Mammary epithelial cell (primary cell): ENCODE measurements at regions of chr17 and their contacts with region 1.

Region 1: GRCh38 chr17:30344283-30345088 is 10.6 kb upstream of the TMIGD1 start:
- DNase-seq: peak; percentile 32
- H3K4me3 ChIP-seq: no peak overlapping the region
- H3K27ac ChIP-seq: no peak overlapping the region
- H3K4me1 ChIP-seq: peaks cover 28% of the 10 kb centered on the region
- H3K27me3 ChIP-seq: no peaks in the 10 kb centered on the region
- CTCF ChIP-seq: no peak

Region 2: DNA sequence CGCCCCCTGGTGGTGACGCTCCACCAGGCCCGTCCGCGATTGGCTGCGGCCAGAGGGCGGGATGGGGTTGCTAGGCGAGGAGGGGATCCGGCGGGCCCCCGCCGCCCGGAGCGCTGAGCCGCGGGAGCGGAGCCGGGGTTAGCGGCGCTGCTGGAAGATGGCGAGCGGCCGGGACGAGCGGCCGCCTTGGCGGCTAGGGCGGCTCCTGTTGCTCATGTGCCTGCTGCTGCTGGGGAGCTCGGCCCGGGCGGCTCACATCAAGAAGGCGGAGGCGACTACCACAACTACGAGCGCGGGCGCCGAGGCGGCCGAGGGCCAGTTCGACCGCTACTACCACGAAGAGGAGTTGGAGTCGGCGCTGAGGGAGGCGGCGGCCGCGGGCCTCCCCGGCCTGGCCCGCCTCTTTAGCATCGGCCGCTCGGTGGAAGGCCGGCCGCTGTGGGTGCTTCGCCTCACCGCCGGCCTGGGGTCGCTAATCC is 34.4 kb after region 1 on chr17 and contains the start of gene CPD:
- CTCF ChIA-PET with region 1: no interaction called
- dilution Hi-C with region 1: loop called (anchors 5 kb)
- in situ Hi-C with region 1: no loop called
- intact Hi-C with region 1: loop called (anchors 1 kb)
- DNase-seq: peak; percentile 94
- H3K4me3 ChIP-seq: peak within 1 kb of the TSS; percentile 69 to 89 (median 76)
- H3K27ac ChIP-seq: peak within 1 kb of the TSS; percentile 53
- H3K4me1 ChIP-seq: peaks cover 24% of the 10 kb centered on the region
- H3K27me3 ChIP-seq: no peaks in the 10 kb centered on the region
- CTCF ChIP-seq: no peak
- total RNA-seq, gene CPD: 56.0 to 136 TPM

Region 3: DNA sequence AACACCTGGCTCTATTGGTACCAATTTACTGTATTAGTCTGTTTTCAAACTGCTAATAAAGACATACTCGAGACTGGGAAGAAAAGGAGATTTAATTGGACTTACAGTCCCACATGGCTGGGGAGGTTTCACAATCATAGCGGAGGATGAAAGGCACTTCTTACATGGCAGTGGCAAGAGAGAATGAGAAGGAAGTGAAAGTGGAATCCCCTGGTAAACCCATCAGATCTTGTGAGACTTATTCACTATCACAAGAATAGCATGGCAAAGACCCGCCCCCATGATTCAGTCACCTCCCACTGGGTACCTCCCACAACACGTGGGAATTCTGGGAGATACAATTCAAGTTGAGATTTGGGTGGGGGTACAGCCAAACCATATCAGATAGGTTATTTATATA is 110.1 kb after region 1 on chr17:
- CTCF ChIA-PET with region 1: no interaction called
- dilution Hi-C with region 1: no loop called
- in situ Hi-C with region 1: no loop called
- intact Hi-C with region 1: loop called (anchors 5 kb)
- DNase-seq: no peak
- H3K4me3 ChIP-seq: no peak overlapping the region
- H3K27ac ChIP-seq: no peak overlapping the region
- H3K4me1 ChIP-seq: no peaks in the 10 kb centered on the region
- H3K27me3 ChIP-seq: no peaks in the 10 kb centered on the region
- CTCF ChIP-seq: no peak

Region 4: DNA sequence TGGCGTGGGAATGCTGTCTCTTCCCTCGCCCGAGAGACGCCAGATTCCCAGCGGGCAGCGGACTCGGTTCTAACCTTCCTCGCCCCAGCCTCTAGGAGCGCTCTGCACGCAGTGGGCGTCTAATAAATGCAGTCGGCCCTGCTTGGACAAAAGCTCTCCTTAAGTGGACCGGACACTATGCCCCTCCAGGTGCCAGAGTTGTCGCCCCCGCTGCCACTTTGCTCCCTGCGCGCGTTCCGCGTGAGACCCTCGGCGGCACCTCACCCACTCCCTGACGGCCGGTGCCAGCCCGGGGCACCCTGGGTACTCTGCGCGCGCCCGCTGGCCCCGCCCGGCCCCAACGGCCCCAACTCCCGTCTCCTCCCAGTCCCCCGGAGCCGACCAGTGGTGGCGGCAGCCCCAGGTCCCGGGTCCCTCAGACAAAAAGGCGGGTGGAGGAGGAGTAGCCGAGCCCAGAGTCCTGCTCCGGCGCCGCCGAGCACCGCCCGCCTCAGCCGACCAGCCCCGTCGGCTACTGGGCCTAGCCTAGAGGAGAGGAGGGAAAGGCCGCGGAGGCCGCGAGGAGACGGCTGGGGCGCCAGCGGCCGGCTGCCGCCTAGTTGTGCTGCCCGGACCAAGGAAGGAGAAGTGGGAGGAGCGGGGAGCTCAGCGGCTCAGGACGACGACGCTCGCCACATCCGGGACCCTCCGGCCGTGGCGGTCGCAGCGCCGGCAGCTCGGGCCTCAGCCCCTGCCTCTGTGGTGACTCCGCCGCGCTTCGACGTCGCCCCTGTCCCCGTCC is 255.8 kb after region 1 on chr17:
- CTCF ChIA-PET with region 1: no interaction called
- dilution Hi-C with region 1: no loop called
- in situ Hi-C with region 1: no loop called
- intact Hi-C with region 1: loop called (anchors 1 kb)
- DNase-seq: peak; percentile 86
- H3K4me3 ChIP-seq: peak overlapping the region; percentile 75 to 96 (median 90)
- H3K27ac ChIP-seq: peak overlapping the region; percentile 57
- H3K4me1 ChIP-seq: no peaks in the 10 kb centered on the region
- H3K27me3 ChIP-seq: no peaks in the 10 kb centered on the region
- CTCF ChIP-seq: peak; percentile 42 to 71